Ascending aorta (tissue), 2 donors: ENCODE measurements at regions of chr16 and their contacts with region 1.

Region 1: DNA sequence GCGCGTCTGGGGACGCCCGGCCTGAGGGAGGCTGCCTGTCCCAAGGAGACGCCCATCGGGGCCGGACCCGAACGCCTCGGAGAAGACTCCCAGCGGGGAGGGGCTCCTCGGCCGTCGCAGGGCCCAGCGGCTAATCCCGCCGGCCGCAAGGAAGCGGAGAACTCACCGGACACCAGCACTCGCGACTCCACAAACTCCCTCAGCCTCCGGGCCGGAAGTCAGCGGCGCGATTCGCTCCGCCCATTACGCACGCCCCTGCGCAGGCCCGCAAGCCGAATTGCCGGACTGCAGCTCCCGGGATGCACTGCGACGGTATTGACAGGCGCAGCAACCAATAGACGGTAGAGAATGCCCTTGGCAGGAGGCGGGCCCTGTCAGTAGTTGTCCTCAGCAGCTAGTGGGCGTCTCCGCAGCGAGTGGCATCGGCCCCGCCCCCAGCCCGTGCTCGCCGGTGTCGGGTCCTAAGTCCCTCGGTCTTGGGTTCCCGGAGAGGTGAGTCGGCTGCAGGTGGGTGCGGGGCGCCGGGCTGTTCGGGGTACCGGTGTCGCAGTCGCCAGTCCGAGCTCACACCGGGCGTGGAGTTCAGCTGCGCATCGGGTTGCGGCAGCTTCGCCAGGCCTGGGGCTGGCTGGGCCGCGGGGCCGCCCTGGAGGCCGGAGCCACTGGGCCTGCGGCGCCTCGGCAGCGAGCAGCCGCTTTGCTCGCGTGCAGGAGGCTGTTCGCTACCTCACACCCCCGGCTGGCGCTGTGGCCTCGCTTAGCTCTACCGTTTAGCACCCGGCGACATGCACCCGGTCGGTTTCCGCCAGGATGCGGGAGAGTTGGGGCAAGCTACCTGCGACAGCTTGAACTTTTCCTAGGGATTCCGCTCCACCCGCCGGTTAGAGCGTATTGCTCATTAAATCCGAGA is at the starts of genes ZNF174 and ZSCAN32:
- DNase-seq: peak; percentile 96 to 99
- H3K4me3 ChIP-seq: peak within 1 kb of the TSS; percentile 74 to 95
- H3K27ac ChIP-seq: peak within 1 kb of the TSS; percentile 79 to 91
- H3K4me1 ChIP-seq: peaks cover 3 to 18% of the 10 kb centered on the region in 2 donors
- H3K27me3 ChIP-seq: no peaks in the 10 kb centered on the region
- CTCF ChIP-seq: no peak
- total RNA-seq, gene ZNF174: 16.0 TPM
- total RNA-seq, gene ZSCAN32: 4.2 TPM

Region 2: GRCh38 chr16:3123986-3124886 is 276.8 kb before region 1 on chr16:
- intact Hi-C with region 1: no loop called
- DNase-seq: peak; percentile 88 to 98
- H3K4me3 ChIP-seq: peak overlapping the region; percentile 66 to 92
- H3K27ac ChIP-seq: peak overlapping the region; percentile 75 to 85
- H3K4me1 ChIP-seq: peaks cover 13 to 18% of the 10 kb centered on the region in 2 donors
- H3K27me3 ChIP-seq: no peaks in the 10 kb centered on the region
- CTCF ChIP-seq: peak in 2 of 3 experiments; percentile 6 to 28

Region 3: DNA sequence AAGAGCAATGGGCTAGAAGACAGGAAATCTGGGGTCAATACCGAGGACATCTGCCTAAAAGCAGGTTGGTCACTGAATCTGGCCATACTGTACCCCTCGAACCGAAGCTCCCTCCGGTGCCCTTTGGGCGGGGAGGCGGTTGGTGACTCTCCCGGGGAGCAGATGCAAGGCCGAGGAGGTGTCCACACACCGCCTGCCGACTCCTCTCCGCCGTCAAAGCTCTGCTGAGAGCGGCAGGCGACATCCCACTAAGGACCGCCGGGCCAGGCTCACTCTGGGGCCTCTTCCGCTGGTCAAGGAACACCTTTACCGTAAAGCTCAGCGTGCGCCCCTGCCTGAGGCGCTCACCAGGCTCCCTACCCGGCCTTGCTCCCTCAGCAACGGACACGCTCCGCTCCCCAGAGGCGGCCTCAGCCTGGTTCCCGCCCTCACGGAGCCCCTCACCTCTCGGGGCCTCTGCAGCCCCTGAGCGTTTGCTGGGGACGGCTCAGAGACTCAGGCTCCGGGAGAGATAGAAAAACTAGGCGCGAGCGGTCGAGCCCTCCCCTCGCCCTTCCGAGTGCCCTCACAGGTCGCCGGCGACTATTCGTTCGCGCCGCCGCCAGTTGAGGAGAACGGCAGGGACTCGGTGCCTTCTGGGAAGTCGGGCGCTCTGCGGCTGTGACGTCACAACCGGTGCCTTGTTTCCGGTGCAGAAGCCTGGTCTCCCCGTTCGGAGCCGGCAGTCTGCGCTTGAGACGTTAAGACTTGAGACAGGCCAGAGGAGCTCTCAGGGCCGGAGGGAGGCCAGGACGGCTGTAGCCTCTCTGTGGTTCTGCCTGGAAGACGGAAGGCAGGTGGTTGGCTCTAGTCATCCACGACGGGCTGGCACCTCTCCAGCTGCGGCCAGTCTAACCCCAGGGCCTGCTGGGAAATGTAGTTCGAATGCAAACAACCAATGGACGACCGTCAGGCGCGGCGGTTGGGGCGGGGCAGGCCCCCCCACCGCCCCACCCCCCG is 166.2 kb before region 1 on chr16 and contains the start of gene ZNF200:
- intact Hi-C with region 1: loop called (anchors 1 kb)
- DNase-seq: peak; percentile 79 to 97
- H3K4me3 ChIP-seq: peak within 1 kb of the TSS; percentile 84 to 97
- H3K27ac ChIP-seq: peak within 1 kb of the TSS; percentile 94 to 97
- H3K4me1 ChIP-seq: peaks cover 0 to 8% of the 10 kb centered on the region in 2 donors
- H3K27me3 ChIP-seq: no peaks in the 10 kb centered on the region
- CTCF ChIP-seq: no peak
- total RNA-seq, gene ZNF200: 14.6 TPM

Region 4: DNA sequence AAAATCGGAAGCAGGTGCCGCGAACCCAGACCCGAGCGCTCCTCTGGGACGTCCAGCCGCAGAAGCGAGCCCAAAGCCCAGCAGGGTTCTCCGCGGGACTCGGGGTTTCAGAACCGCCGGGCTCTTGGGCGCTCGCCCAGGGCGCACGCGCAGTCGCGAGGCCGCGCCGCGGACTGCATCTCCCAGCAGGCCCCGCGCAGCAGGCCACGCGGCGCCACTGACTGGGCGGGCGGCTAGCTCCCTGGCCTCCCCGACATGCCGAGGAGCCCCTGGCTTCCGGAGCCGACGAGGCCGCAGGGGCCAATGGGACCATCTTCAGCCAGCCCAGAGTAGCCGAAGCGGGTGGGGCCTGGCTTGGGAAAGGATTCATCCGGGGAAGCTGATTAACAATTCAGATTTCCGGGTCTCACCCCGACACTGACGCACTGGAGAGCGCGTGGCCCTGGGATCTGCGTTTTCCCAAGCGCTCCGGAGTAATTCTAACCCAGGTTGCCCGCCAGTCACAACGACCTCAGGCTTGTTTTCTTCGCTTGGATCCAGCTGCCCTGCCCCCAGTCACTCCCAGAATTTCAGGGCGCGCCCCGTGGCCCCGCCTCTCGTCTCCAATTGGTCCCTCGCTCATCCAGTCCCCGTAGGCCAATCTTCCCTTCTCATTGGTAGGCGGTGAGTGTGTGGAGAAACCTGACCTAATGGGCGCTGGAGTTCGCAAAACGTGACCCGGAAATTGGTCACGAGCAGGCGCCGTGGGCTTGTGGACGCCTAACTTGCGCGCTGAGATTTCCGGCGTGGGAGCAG is 118.1 kb before region 1 on chr16 and contains the start of gene ZNF263:
- intact Hi-C with region 1: loop called (anchors 1 kb)
- DNase-seq: peak; percentile 87 to 98
- H3K4me3 ChIP-seq: peak within 1 kb of the TSS; percentile 92 to 96
- H3K27ac ChIP-seq: peak within 1 kb of the TSS; percentile 95 to 100
- H3K4me1 ChIP-seq: peaks cover 12 to 13% of the 10 kb centered on the region in 2 donors
- H3K27me3 ChIP-seq: no peaks in the 10 kb centered on the region
- CTCF ChIP-seq: no peak
- total RNA-seq, gene ZNF263: 61.8 TPM

Region 5: DNA sequence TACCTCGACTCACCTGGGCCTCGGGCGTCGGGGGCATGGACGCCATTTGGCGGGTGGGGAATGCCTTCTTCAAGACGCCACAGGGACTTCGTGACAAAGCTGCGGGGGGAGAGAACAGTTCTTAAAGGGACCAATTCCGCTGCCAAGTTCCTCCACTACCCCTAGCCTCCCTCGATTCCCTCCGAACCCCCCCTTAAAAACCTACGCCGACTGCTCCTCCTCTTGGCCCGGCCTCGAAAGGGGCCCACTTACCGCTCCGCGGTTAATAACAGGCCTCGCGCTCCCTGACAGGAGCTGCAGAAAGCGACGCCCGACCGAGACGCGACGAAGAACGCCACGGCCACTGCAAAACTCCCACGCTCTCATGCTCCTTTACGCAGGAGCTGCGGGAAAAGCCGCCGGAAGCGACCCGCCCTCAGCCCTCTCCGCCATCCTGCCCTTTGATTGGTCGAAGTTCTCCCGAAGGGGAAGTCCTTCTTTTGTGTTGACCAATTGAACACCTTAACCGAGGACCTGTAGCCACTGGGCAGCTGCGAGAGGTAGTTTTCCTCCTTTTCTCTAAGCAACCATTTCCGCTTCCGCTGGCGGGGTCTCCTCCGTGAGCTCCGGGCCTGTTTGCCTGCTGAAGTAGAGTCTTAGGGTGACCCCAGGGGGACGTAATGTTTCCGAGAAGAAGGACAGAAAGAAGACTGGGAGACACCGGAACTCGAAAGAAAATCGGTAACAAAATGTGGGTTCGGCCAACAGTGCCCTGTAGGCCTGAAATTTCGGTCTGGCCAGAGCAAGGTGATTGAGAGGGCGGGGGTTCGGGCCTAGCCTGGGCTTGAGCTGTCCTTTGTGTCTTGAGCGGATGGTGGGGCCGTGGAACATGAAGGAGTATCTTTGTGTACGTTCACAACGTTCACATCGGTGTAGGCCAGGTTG is 42.3 kb after region 1 on chr16 and contains the starts of genes NAA60 and ZNF597:
- intact Hi-C with region 1: loop called (anchors 1 kb)
- DNase-seq: peak; percentile 38 to 90
- H3K4me3 ChIP-seq: peak within 1 kb of the TSS; percentile 53 to 83
- H3K27ac ChIP-seq: peak within 1 kb of the TSS; percentile 75 to 79
- H3K4me1 ChIP-seq: no peaks in the 10 kb centered on the region
- H3K27me3 ChIP-seq: no peaks in the 10 kb centered on the region
- CTCF ChIP-seq: no peak
- total RNA-seq, gene NAA60: 74.6 TPM
- total RNA-seq, gene ZNF597: 0.21 TPM

Region 6: DNA sequence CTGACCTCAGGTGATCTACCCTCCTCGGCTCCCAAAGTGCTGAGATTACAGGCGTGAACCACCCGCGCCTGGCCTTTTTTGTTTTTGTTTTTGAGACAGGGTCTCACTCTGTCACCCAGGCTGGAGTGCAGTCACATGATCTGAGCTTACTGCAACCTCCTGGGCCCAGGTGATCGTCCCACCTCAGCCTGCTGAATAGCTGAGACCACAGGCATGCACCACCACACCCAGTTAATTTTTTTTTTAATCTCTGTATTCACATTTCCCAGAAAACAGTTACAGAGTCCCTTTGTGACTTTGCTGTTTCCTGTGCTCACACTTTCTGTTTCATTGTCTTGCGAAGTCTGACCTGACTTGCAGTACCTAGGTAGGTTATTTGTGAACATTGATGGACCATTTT is 102.5 kb after region 1 on chr16:
- intact Hi-C with region 1: loop called (anchors 1 kb)
- DNase-seq: no peak
- H3K4me3 ChIP-seq: no peak overlapping the region
- H3K27ac ChIP-seq: no peak overlapping the region
- H3K4me1 ChIP-seq: peaks cover 4% of the 10 kb centered on the region in 2 donors
- H3K27me3 ChIP-seq: no peaks in the 10 kb centered on the region
- CTCF ChIP-seq: no peak